ENCODE measurements at regions of chr19 and their contacts with region 1.

Region 1: DNA sequence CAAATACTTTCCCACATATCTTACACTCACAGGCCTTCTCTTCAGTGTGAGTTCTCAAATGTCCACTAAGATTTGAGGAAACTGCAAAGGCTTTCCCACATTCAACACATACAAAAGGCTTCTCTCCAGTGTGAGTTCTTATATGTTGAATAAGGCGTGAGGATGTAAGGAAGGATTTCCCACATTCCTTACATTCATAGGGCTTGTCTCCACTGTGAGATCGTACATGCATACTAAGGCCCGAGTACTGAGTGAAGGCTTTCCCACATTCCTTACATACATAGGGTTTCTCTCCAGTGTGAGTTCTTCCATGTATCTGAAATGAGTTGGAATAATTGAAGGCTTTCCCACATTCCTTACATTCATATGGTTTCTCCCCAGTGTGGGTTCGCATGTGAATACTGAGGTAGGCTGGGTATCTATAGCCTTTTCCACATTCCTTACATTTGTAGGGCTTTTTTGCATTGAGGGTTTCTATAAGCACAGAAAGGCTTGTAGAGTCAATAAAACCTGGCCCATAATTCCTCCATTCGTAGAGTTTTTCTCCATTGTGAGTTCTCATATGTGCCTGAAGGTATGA is 9.6 kb downstream of the ZNF426 start:
- DNase-seq: no peak
- H3K4me3 ChIP-seq: no peak overlapping the region
- H3K27ac ChIP-seq: no peak overlapping the region
- H3K4me1 ChIP-seq: no peaks in the 10 kb centered on the region
- H3K27me3 ChIP-seq: no peaks in the 10 kb centered on the region
- CTCF ChIP-seq: no peak
- POLR2A ChIP-seq: no peak

Region 2: DNA sequence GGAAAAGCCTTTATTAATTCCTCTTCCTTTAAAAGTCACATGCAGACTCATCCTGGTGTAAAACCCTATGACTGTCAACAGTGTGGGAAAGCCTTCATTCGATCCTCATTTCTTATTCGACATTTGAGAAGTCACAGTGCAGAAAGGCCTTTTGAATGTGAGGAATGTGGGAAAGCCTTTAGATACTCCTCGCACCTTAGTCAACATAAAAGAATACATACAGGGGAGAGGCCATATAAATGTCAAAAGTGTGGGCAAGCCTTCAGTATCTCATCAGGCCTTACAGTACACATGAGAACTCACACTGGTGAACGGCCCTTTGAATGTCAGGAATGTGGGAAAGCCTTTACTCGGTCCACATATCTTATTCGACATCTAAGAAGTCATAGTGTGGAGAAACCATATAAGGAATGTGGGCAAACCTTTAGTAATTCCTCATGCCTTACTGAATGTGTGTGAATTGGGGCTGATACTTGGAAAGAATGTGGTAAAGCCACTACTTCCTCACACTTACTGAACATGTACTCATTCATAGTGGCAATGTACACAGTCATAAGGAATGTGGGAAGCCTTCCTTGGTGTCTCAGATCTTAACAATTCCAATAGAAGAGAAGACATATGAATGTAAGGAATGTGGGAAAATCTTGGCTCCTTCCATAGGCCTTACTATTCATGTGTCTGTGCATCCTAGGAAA is 186.1 kb before region 1 on chr19:
- intact Hi-C with region 1: loop called (anchors 10 kb)
- DNase-seq: no peak
- H3K4me3 ChIP-seq: no peak overlapping the region
- H3K27ac ChIP-seq: no peak overlapping the region
- H3K4me1 ChIP-seq: no peaks in the 10 kb centered on the region
- H3K27me3 ChIP-seq: no peaks in the 10 kb centered on the region
- CTCF ChIP-seq: no peak
- POLR2A ChIP-seq: no peak

Region 3: DNA sequence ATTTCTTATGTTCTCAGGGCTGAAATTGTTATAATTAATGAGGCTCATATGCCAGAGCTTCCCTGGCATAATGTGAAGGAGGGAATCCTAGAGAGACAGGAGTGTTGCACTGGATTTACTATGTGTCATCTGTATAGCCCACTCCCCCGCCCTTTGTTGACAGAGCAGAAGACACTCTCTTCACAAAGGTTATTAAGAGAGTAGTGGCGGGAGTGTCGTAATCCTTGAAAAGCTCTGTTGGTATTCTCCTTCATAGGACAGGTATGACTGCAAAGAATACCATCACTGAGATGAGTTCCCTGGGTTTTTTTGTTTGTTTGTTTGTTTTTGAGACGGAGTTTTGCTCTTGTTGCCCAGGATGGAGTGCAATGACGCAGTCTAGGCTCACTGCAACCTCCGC is 41.4 kb after region 1 on chr19:
- intact Hi-C with region 1: loop called (anchors 5 kb)
- DNase-seq: no peak
- H3K4me3 ChIP-seq: no peak overlapping the region
- H3K27ac ChIP-seq: no peak overlapping the region
- H3K4me1 ChIP-seq: no peaks in the 10 kb centered on the region
- H3K27me3 ChIP-seq: no peaks in the 10 kb centered on the region
- CTCF ChIP-seq: no peak
- POLR2A ChIP-seq: no peak

Region 4: DNA sequence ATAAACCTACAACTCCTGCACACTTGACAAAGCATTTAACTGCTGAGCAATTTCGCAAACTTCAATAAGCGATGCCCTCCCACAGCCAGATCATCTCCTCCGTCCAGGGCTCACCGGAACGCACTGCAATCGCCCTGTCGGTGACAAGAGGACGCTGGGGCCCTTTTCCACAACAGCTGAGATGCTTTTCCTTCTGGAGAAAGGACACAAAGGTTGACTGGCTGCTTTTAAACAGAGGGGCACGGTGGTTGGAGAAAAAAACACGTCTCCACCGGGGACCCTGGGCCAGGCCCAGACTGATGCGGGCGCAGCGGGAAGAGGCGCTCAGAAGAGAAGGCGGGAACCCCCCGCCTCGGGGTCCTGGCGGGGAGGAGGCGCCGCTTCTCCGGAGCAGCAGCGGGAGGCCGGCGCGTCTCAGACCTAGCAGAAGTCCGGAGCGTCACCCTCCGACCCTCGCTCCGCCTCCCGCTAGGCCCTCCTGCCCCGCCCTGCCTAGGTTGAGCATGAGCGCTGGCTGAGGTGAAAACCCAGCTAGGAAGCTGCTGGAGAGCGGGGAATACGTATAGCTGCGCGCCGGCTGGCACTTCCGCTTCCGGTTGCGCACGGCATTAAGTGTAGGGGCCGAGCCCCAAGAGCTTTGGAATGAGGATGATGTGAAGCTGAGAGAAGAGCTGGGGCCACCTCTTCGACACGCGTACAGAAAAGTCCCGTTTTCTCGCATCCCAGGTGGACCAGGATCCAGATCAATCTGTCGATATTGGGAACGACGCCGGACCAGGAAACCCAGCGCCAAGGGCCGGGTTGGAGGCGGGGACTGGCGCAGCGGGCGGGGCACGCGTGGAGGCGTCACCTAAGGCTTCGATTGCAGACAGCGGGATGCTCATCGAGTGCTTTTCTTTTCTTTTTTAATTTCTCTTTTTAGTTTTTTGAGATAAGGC is 239.6 kb after region 1 on chr19 and contains the start of gene ZNF846:
- intact Hi-C with region 1: no loop called
- DNase-seq: peak; percentile 95 to 96
- H3K4me3 ChIP-seq: peak within 1 kb of the TSS; percentile 58 to 73 (median 62)
- H3K27ac ChIP-seq: peak within 1 kb of the TSS; percentile 80 to 95 (median 89)
- H3K4me1 ChIP-seq: peaks cover 5 to 15% of the 10 kb centered on the region in 2 donors
- H3K27me3 ChIP-seq: no peaks in the 10 kb centered on the region
- CTCF ChIP-seq: no peak
- POLR2A ChIP-seq: peak in 1 of 2 donors; percentile 80
- total RNA-seq, gene ZNF846: 12.1 to 24.4 (median 19.3) TPM